ENCODE measurements at regions of chr12 and their contacts with region 1.

Region 1: DNA sequence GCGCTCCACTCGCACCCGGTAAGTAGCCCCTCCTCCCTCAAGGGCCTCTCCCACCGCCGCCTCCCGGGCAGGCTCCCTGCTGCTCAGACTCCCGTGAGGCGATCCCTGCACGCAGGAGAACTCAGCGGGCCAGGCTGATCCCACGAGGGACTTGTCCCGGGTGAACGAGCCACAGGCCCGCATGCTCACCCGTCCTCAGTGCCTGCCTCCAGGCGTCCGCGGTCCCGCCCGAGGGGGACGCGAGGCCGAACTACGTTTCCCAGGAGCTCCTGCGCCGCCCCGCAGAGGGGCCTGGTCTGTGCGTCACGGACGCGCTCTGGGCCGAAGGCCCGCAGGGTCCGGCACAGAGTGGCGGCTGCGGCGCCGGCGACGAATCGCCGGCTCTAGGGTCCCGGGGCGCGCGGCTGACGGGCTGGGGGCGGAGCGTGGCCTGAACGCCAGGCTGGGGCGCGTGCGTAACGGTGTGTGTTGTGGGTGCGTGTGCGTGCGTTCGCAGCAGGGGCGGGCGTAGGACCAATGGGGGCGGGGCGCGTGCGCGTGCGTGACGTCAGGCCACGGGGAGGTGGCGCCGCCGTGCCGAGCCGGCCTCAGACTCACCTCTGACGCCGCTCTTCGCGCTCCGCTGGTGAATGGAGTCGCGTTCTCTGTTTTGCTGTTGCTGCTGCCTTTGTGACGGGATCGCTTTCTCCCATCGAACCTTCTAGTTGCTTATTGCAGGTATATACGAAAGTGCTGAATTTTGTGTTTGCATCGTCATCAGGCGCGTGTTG is at the starts of genes ZNF10 and ZNF891:
- DNase-seq: peak; percentile 95 to 98 (median 98)
- H3K4me3 ChIP-seq: peak within 1 kb of the TSS; percentile 59 to 87
- H3K4me3 Mint-ChIP-seq: peak within 1 kb of the TSS; percentile 87 to 99 (median 95)
- H3K27ac ChIP-seq: peak within 1 kb of the TSS; percentile 98
- H3K27ac Mint-ChIP-seq: peak within 1 kb of the TSS; percentile 92 to 100 (median 99)
- H3K4me1 ChIP-seq: peaks cover 10% of the 10 kb centered on the region
- H3K4me1 Mint-ChIP-seq: peaks cover 11 to 25% (median 19%) of the 10 kb centered on the region in 4 donors
- H3K27me3 ChIP-seq: no peaks in the 10 kb centered on the region
- H3K27me3 Mint-ChIP-seq: no peaks in the 10 kb centered on the region
- total RNA-seq, gene ZNF10: 17.4 to 19.6 TPM
- total RNA-seq, gene ZNF891: 6.2 to 7.3 TPM

Region 2: DNA sequence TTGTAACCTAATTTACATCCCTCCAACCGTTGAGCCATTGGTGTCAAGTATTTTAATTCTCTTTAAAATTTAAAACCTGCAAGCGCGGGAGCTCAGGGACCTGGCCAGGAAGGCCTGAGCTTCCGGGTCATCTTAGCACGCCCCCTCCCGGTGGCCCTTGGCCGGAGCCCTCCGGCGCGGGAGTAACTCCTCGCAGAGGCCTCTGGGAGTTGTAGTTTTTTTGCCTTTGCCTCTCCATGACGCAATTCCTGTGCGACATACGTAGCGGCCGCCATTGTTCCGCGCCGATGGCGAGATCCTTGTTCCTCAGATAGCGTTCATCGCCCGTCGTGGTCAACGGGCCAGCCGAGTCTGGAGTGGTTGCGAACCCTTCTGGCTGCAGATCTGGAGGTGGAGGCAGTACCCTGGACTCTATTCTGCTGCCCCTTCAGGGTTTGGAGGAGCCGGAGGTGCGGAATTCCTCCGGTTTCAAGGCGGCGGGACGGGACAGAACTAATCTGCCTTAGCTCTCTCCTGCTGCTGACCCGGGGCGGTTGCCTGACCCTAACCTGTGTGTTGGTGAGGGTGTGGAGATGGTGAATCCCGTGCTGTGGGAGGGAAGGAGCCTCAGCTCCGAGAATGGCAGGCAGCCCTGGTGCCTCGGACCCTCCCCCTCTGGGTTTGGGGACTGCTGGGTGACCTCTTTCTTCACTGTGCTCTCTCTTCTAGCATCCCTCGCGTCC is 51.2 kb after region 1 on chr12 and contains the start of gene ZNF268:
- CTCF ChIA-PET with region 1: interaction called, 5 read pairs
- POLR2A ChIA-PET with region 1: interaction called, 18 read pairs
- intact Hi-C with region 1: loop called (anchors 1 kb)
- DNase-seq: peak; percentile 84 to 89 (median 85)
- H3K4me3 ChIP-seq: peak within 1 kb of the TSS; percentile 96 to 100
- H3K4me3 Mint-ChIP-seq: peak within 1 kb of the TSS; percentile 89 to 97 (median 94)
- H3K27ac ChIP-seq: peak within 1 kb of the TSS; percentile 73
- H3K27ac Mint-ChIP-seq: peak within 1 kb of the TSS; percentile 91 to 98 (median 96)
- H3K4me1 ChIP-seq: peaks cover 10% of the 10 kb centered on the region
- H3K4me1 Mint-ChIP-seq: peaks cover 19 to 34% (median 23%) of the 10 kb centered on the region in 4 donors
- H3K27me3 ChIP-seq: no peaks in the 10 kb centered on the region
- H3K27me3 Mint-ChIP-seq: no peaks in the 10 kb centered on the region
- total RNA-seq, gene ZNF268: 34.9 to 39.6 TPM

Region 3: DNA sequence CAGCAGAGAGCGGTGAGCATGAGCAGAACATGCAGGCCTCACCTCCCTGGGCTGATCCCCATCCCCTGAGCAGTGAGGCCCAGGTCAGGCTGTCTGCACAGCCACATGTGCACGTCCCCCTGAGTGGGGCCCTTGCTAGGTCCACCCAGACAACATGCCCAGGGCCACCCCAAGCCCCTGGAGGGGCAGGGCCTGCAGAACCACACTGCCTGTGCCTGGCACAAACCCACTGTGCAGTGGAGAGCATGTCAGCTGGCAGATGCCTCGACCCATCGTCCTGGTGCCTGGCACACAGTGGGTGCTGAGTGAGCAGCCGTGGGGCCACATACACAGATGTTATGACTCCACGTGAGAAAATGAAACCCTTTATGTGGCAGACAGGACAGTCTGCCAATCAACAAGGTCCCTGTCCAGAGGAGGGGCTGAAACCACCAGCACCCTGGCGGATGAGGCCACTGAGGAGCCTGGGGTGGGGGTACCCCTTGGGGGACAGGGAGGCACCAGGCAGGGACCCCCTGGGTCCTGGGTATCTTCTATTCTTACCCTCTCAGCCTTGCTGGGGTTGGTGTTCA is 97.1 kb after region 1 on chr12:
- CTCF ChIA-PET with region 1: no interaction called
- POLR2A ChIA-PET with region 1: no interaction called
- intact Hi-C with region 1: no loop called
- DNase-seq: no peak
- H3K4me3 ChIP-seq: no peak overlapping the region
- H3K4me3 Mint-ChIP-seq: no peak overlapping the region
- H3K27ac ChIP-seq: no peak overlapping the region
- H3K27ac Mint-ChIP-seq: no peak overlapping the region
- H3K4me1 ChIP-seq: no peaks in the 10 kb centered on the region
- H3K4me1 Mint-ChIP-seq: peaks cover 0 to 2% (median under 1%) of the 10 kb centered on the region in 4 donors
- H3K27me3 ChIP-seq: no peaks in the 10 kb centered on the region
- H3K27me3 Mint-ChIP-seq: peaks cover 0 to 3% of the 10 kb centered on the region in 2 donors

Measured in CD4-positive, alpha-beta memory T cell (primary cell).